GM13976 (cell line): ENCODE measurements at regions of chr4 and their contacts with region 1.

Region 1: DNA sequence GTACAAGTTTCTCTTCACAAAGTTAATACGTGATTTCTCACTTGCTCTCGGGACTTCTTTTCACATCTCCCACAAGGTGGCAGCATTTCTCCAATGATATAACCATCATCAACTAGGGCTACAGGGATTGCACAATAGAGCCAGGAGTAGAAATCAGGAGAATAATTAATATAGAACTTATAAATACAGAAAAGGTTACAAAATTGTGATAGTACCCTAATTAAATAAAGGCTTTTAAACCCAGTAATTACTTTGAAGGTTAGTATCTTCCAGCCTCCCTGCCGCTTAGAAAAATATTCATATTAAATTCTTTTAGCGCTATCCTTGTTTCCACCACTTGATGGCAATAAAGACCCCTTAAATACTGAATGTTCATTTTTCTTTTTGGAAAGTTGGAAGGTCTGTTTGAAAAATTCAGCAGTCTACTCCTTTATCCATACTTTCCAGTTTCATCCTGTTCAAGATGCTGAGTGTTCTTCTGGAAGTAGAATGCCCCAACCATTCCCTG is 65.8 kb downstream of the RASGEF1B start:
- DNase-seq: peak; percentile 61
- CTCF ChIP-seq: peak; percentile 53

Region 2: GRCh38 chr4:81136161-81136905 is 269.6 kb before region 1 on chr4:
- in situ Hi-C with region 1: no loop called
- DNase-seq: no peak
- CTCF ChIP-seq: no peak

Region 3: DNA sequence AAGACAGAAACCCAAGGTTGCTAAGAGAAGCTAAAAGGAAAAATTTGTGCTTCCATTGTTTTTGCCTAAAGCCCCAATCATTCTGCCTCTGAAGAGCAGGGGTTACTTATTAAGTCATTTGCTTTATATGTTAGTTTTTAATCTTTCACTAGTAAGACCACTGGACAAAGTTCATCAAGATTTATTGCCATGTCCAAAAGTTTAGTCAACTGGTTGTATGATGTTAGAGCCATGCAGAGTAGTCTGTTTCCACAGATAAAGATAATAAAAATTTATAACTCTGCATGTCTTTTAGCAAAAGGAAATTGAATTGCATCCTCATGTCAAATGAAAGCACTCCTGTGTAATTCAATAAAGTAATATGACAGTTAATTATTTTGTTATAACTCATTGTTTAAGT is 115.1 kb before region 1 on chr4:
- in situ Hi-C with region 1: no loop called
- DNase-seq: no peak
- CTCF ChIP-seq: no peak

Region 4: DNA sequence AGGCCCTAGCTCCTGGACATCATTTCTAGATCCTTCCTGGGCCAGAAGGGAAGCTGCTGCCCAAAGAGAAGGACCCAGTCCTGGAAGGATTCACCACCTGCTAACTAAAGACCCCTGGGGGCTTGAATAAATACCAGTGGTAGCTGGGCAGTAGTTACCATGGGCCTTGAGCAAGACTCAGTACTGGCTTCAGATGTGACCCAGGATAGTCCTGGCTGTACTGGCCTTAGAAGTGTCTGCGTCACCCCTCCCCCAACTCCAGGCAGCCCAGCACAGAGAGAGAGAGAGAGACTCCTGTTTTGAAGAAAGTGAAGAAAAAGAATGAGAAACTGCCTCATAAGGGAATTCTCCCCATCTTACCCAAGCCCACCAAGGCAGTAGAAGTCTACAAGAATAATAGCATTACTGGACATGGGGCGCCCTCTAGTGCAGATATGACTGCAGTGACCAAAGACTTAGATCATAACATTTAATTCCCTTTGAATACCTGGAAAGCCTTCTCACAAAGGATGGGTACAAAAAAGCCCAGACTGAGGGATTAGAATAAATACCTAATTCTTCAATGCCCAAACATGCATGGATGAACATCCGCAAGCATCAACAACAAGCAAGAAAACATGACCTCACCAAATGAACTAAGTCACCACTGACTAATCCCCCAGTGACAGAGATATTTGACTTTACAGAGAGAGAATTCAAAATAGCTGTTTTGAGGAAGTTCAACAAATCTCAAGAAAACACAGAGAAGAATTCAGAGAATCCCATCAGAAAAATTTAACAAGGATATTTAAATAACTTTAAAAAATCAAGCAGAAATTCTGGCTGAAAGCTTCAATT is 796.1 kb after region 1 on chr4:
- in situ Hi-C with region 1: loop called (anchors 10 kb)
- DNase-seq: peak; percentile 16
- CTCF ChIP-seq: peak; percentile 54